Aorta (tissue), 5 donors: ENCODE measurements at regions of chr9 and their contacts with region 1.

Region 1: DNA sequence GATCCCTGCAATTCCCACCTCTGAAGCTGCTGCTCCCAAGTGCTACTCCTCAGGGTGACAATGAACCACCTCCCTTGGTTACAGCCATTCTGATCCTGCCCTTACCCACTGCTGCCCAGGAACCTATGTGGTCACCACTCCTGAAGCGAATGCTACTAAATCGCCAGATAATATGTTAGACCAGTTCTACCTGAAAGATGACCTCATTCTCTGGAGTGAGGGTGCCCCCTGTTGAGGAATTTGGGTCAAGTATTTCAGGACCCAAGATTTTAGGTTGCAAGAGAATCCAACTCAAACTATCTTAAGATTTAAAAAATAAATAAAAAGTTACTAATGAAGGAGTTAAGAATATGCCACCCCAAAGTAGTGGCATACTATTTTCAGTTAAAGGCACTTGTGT is 5.8 kb upstream of the SNAPC3 start:
- DNase-seq: no peak
- ATAC-seq: peak; percentile 60
- H3K4me3 ChIP-seq: no peak overlapping the region
- H3K27ac ChIP-seq: no peak overlapping the region
- H3K4me1 ChIP-seq: peaks cover 0 to 3% of the 10 kb centered on the region in 2 donors
- H3K27me3 ChIP-seq: no peaks in the 10 kb centered on the region

Region 2: GRCh38 chr9:15211160-15211814 is 205.6 kb before region 1 on chr9:
- intact Hi-C with region 1: loop called (anchors 2 to 5 kb)
- DNase-seq: peak in 1 of 2 donors; percentile 46
- ATAC-seq: peak; percentile 89
- H3K4me3 ChIP-seq: peak overlapping the region in 1 of 2 donors; percentile 16
- H3K27ac ChIP-seq: peak overlapping the region; percentile 46 to 84
- H3K4me1 ChIP-seq: peaks cover 0 to 7% of the 10 kb centered on the region in 2 donors
- H3K27me3 ChIP-seq: no peaks in the 10 kb centered on the region

Region 3: GRCh38 chr9:15280647-15281046 is 136.2 kb before region 1 on chr9:
- intact Hi-C with region 1: loop called in 1 of 2 experiments (anchors 5 kb)
- DNase-seq: no peak
- ATAC-seq: no peak
- H3K4me3 ChIP-seq: no peak overlapping the region
- H3K27ac ChIP-seq: no peak overlapping the region
- H3K4me1 ChIP-seq: peaks cover 2 to 4% of the 10 kb centered on the region in 2 donors
- H3K27me3 ChIP-seq: no peaks in the 10 kb centered on the region

Region 4: GRCh38 chr9:15357050-15357653 is 59.7 kb before region 1 on chr9:
- intact Hi-C with region 1: loop called in 1 of 2 experiments (anchors 5 kb)
- DNase-seq: no peak
- ATAC-seq: no peak
- H3K4me3 ChIP-seq: no peak overlapping the region
- H3K27ac ChIP-seq: no peak overlapping the region
- H3K4me1 ChIP-seq: no peaks in the 10 kb centered on the region
- H3K27me3 ChIP-seq: no peaks in the 10 kb centered on the region

Region 5: DNA sequence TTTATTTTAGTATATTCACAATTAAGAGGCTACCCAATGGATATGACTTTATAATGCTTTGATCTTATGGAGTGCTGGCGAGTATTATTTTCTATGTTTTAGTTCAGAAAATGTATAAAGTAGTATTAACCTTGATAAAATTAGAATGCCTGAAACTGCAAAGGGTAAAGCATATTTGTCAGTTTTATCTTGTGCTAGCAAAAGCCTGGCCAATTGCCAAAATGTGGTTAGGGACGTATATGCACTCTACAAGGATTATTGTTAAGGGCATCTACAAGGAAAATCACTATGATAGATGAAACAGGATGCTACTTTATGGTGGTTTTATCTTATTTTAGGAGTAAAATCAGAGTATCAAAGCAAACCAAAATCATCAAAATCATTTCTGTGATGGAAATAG is 417.7 kb after region 1 on chr9:
- intact Hi-C with region 1: no loop called
- DNase-seq: no peak
- ATAC-seq: no peak
- H3K4me3 ChIP-seq: no peak overlapping the region
- H3K27ac ChIP-seq: no peak overlapping the region
- H3K4me1 ChIP-seq: no peaks in the 10 kb centered on the region
- H3K27me3 ChIP-seq: no peaks in the 10 kb centered on the region